ENCODE measurements at regions of chr17 and their contacts with region 1.

Region 1: DNA sequence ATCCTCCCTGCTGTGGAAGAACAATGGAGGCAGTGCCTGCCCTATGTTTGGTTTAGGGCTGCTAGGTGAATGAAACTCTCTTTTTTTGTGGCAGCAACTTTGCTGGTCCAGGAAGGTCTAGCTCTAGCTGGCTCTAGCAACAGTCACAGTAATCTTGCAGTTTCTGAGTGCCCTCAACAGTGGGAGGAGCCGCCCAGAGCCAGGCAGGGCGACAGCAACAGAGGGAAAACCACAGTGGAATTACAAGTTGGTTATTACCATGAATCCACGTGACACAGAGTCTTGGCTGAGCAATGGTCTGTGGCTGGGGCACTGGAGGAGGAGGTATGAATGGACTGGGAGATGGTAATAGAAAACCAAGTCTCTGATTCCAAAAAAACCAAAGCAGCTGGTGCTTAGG is 10.3 kb downstream of the HSPB9 start:
- DNase-seq: no peak
- H3K4me3 ChIP-seq: peak overlapping the region; percentile 43
- H3K27ac ChIP-seq: peak overlapping the region; percentile 94
- H3K4me1 ChIP-seq: peaks cover 69% of the 10 kb centered on the region
- CTCF ChIP-seq: no peak

Region 2: GRCh38 chr17:42120770-42121769 is 11.9 kb before region 1 on chr17 and contains the start of gene KAT2A:
- CTCF ChIA-PET with region 1: interaction called, 12 read pairs
- POLR2A ChIA-PET with region 1: interaction called, 12 read pairs
- intact Hi-C with region 1: no loop called
- DNase-seq: peak; percentile 87
- H3K4me3 ChIP-seq: peak within 1 kb of the TSS; percentile 77
- H3K27ac ChIP-seq: peak within 1 kb of the TSS; percentile 46
- H3K4me1 ChIP-seq: peaks cover 44% of the 10 kb centered on the region
- CTCF ChIP-seq: no peak
- total RNA-seq, gene KAT2A: 56.1 and 73.0 TPM in 2 replicates

Region 3: DNA sequence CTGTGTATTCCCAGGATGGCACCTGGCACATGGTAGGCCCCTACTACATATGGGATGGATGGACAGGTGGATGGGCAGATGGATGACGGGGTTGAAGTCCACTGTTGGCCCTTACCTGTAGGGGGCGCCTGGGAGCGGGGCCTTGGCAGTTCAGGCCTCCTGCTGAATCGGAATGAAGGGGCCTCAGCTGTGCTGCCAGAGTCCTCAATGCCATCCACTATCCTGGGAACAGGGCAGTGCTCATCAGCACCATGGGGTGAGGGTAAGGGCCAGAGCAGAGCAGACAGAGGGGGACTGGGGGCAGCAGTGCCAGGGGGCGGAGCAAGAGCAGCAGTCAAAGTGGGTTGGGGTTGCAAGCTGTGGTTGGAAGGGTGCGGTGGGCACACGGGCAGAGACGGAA is 30.2 kb after region 1 on chr17:
- CTCF ChIA-PET with region 1: no interaction called
- POLR2A ChIA-PET with region 1: no interaction called
- intact Hi-C with region 1: no loop called
- DNase-seq: peak; percentile 36
- H3K4me3 ChIP-seq: no peak overlapping the region
- H3K27ac ChIP-seq: no peak overlapping the region
- H3K4me1 ChIP-seq: no peaks in the 10 kb centered on the region
- CTCF ChIP-seq: peak; percentile 83

Region 4: DNA sequence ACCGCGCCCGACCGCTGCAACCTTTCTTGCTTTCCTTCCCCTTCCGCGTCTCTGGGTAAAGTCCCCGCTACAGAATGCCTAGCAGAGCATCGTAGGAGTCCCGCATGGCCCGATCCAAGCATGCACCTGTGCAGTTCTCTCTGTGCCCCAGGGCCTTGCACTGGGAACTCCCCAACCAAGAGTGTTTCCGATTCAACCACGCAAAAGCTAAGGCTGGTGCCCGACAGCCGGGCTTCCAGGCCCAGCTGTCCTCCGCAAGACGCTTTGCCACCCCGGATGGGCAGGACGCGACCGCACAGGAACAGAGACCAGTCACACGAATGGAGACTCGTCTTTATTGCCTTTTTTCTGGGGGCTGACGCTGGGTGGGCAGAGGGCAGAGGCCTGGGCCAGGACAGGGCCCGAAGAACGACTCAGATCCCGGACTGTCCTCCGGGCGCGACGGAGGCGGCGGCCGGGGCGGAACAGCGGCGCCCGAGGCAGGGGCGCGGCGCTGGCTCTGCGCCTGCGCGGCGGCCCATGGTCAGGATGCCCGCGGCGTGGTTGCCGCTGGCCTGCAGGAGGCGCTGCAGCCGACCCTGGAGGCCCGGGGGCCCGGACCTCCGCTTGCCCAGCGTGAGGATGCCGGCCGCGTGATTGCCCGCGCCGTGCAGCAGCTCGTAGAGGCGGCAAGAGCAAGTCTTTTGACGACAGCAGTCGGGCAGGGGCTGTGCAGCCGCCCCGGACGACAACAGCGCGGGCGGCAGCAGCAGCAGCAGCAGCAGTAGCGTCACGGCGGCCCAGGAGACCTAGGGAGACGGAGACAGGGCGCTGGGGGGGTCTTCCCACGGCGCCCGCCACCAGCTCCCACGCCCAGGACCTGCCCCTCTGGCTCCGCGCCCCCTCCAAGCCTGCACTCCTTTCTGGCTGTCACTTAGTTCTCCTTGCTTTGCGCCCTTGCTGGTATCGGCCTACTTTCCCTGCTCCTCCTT is 51.1 kb after region 1 on chr17:
- CTCF ChIA-PET with region 1: no interaction called
- POLR2A ChIA-PET with region 1: interaction called, 3 read pairs
- intact Hi-C with region 1: loop called (anchors 5 kb)
- DNase-seq: peak; percentile 79
- H3K4me3 ChIP-seq: peak overlapping the region; percentile 61
- H3K27ac ChIP-seq: no peak overlapping the region
- H3K4me1 ChIP-seq: peaks cover 27% of the 10 kb centered on the region
- CTCF ChIP-seq: peak; percentile 81

Region 5: GRCh38 chr17:42536048-42536371 is 403.1 kb after region 1 on chr17 and contains the start of gene NAGLU:
- CTCF ChIA-PET with region 1: no interaction called
- POLR2A ChIA-PET with region 1: no interaction called
- intact Hi-C with region 1: loop called (anchors 5 kb)
- DNase-seq: peak; percentile 96
- H3K4me3 ChIP-seq: peak within 1 kb of the TSS; percentile 79
- H3K27ac ChIP-seq: peak within 1 kb of the TSS; percentile 60
- H3K4me1 ChIP-seq: peaks cover 25% of the 10 kb centered on the region
- CTCF ChIP-seq: no peak
- total RNA-seq, gene NAGLU: 25.3 and 37.6 TPM in 2 replicates

Measured in OCI-LY7 (cell line).